Mammary epithelial cell (primary cell): ENCODE measurements at regions of chr11 and their contacts with region 1.

Region 1: DNA sequence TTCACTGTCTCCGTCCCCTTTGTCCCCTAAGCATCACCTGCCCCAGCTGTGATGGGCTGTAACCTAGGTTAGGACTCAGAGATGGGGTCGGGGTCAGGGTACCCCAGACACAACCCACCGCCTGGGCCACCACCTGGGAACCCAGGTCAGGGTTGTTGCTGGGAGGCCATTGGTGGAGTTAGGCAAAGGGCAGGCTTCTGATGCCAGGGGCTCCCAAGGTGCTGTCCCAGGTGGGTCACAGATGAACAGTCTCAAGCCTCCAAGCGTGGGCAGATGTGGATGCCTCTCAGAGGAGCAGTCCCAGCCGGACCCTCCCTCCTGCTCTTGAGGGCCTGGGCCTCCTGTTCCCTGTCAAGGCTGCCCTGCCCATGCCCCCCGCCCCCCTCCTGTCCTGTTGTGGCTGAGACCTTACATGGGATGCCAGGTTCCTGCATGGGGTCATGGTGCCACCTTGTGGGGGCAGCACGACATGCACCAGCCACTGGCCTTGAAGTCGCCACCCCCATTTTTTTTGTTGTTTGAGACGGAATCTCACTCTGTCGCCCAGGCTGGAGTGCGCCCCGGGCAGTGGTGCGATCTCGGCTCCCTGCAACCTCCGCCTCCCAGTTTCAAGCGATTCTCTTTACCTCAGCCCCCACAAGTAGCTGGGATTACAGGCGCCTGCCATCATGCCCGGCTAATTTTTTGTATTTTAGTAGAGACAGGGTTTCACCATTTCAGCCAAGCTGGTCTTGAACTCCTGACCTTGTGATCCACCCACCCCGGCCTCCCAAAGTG is 12.1 kb downstream of the GATD1 start:
- DNase-seq: peak; percentile 19
- H3K4me3 ChIP-seq: no peak overlapping the region
- H3K27ac ChIP-seq: no peak overlapping the region
- H3K4me1 ChIP-seq: peaks cover 20% of the 10 kb centered on the region
- H3K27me3 ChIP-seq: no peaks in the 10 kb centered on the region
- CTCF ChIP-seq: peak; percentile 36 to 62

Region 2: GRCh38 chr11:554824-555472 is 210.3 kb before region 1 on chr11:
- CTCF ChIA-PET with region 1: no interaction called
- dilution Hi-C with region 1: no loop called
- in situ Hi-C with region 1: loop called in 1 of 2 experiments (anchors 25 kb)
- intact Hi-C with region 1: loop called (anchors 1 kb)
- DNase-seq: peak; percentile 62
- H3K4me3 ChIP-seq: peak overlapping the region in 2 of 3 experiments; percentile 26 to 41
- H3K27ac ChIP-seq: no peak overlapping the region
- H3K4me1 ChIP-seq: peaks cover 9% of the 10 kb centered on the region
- H3K27me3 ChIP-seq: peaks cover 8% of the 10 kb centered on the region
- CTCF ChIP-seq: peak; percentile 36 to 64

Region 3: GRCh38 chr11:747158-748006 is 17.8 kb before region 1 on chr11 and contains the start of gene TALDO1:
- CTCF ChIA-PET with region 1: no interaction called
- dilution Hi-C with region 1: no loop called
- in situ Hi-C with region 1: no loop called
- intact Hi-C with region 1: no loop called
- DNase-seq: peak; percentile 86
- H3K4me3 ChIP-seq: peak within 1 kb of the TSS; percentile 87 to 92 (median 90)
- H3K27ac ChIP-seq: peak within 1 kb of the TSS; percentile 71
- H3K4me1 ChIP-seq: peaks cover 19% of the 10 kb centered on the region
- H3K27me3 ChIP-seq: no peaks in the 10 kb centered on the region
- CTCF ChIP-seq: peak; percentile 5 to 42
- total RNA-seq, gene TALDO1: 102 to 140 TPM

Region 4: DNA sequence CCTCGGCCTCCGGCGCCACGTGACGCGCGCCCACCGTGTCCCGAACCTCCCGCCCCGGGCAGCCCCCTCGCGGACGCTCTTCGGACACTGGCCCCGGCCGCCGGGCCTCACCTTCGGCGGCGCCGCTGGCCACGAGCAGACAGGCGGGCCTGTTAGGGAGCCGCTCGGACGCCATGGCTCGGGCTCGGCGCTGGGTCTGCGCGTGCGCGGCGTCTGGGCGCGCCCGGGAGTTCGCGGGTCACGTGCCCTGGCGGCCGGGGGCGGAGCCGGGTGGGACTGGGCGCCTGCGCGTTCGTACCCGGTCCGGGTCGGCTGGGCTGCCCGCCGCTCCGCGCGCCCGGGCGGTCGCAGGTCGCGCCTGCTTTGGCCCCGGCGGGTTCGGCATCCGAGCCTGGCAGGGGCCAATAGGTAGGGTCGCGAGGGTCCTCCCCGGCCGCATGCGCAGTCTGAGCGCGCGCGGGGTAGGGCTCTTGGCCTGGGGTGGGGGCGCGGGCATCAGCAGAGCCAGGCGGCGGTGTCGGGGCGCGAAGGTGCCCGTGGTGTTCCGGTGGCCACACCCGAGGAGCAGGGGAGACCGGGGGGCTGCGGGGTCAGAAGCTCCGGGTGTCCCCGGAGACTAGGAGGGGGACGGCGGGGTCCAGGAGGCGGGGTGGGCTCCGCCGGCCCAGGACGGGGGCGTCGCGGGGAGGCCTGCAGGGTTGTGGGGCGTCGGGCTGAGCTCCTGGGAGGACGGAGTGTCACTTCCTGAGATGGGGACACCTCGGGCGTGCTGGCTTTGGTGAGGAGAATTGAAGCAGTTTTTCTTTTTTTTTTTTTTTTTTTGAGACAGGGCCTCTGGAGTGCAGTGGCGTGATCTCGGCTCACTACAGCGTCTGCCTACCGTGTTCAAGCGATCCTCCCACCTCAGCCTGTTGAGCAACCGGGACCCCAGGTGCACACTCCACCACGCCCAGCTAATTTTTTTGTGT is 12.4 kb after region 1 on chr11 and contains the start of gene GATD1:
- CTCF ChIA-PET with region 1: no interaction called
- dilution Hi-C with region 1: no loop called
- in situ Hi-C with region 1: no loop called
- intact Hi-C with region 1: loop called (anchors 2 kb)
- DNase-seq: peak; percentile 84
- H3K4me3 ChIP-seq: peak within 1 kb of the TSS; percentile 91 to 98 (median 96)
- H3K27ac ChIP-seq: peak within 1 kb of the TSS; percentile 63
- H3K4me1 ChIP-seq: peaks cover 58% of the 10 kb centered on the region
- H3K27me3 ChIP-seq: no peaks in the 10 kb centered on the region
- CTCF ChIP-seq: no peak
- total RNA-seq, gene GATD1: 47.0 to 78.2 TPM